ENCODE measurements at regions of chr3 and their contacts with region 1.

Region 1: DNA sequence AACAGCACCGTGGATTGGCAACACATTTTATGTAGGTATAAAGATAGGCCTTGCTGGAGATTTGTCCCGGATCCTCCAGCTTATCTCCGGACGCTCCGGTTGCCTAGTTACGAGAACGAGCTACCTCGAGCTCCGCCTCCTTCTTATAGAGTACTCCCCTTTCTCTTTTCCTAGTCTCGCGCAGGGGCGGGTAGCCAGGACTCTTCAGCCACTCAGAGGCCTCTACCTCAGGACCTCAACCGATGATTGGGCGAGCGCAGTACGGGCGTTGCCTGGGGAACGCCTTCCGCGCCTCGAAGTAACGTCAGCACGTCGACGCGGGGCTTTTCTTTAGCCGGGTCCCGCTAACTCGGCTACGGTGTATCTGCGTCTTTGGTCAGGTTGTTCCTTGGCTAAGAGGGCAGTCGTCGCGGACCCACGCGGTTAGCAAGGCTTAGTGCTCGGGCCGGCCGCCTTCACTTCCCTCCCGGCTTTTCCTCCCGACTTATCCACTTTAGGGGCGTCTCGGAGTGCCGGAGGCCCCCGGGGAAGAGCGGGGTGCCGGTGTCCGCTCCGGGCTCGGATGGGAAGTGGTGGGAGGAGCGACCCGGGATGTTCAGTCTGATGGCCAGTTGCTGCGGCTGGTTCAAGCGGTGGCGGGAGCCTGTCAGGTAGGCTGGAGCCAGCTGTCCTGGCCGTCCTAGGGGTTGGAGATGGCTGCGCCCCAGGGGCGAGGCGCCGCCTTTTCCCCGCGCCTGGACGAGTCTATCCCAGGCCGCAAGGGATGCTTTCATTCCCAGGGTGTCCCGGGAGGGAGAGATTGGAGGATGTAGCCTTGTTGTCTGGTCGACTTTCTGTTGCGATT is at the start of gene ARL13B:
- DNase-seq: peak; percentile 96
- H3K4me3 Mint-ChIP-seq: peak within 1 kb of the TSS; percentile 82
- H3K27ac Mint-ChIP-seq: peak within 1 kb of the TSS; percentile 56
- H3K4me1 Mint-ChIP-seq: peaks cover 19% of the 10 kb centered on the region
- H3K27me3 Mint-ChIP-seq: no peaks in the 10 kb centered on the region
- total RNA-seq, gene ARL13B: 12.0 to 12.9 TPM

Region 2: DNA sequence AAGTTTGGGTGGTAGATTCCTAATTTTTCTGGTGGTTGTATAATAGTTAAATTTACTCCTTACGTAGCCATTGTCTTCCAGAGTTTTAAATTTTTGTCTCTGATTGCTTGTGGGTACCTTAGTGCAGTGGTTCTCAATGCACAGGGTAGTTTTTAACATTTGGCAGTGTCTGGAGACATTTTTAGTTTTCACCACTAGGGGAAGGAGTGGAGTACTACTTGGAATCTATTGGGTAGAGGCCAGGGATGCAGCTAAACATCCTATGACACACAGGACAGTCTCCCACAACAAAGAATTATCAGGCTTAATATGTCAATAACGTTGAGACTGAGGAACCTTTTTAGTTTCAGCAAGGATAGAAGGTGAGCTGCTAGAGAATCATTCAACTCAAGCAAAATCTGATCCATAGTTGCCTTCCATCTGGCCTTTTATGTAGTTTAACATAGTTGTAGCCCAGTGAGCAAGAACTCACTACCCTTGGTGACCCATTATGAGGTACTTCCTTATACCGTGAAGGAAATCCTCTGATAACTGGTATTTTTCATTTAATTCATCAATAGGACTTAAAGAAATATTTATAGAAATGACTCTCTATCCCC is 57.0 kb after region 1 on chr3:
- CTCF ChIA-PET with region 1: no interaction called
- POLR2A ChIA-PET with region 1: no interaction called
- intact Hi-C with region 1: no loop called
- DNase-seq: no peak
- H3K4me3 Mint-ChIP-seq: no peak overlapping the region
- H3K27ac Mint-ChIP-seq: no peak overlapping the region
- H3K4me1 Mint-ChIP-seq: no peaks in the 10 kb centered on the region
- H3K27me3 Mint-ChIP-seq: no peaks in the 10 kb centered on the region

Region 3: DNA sequence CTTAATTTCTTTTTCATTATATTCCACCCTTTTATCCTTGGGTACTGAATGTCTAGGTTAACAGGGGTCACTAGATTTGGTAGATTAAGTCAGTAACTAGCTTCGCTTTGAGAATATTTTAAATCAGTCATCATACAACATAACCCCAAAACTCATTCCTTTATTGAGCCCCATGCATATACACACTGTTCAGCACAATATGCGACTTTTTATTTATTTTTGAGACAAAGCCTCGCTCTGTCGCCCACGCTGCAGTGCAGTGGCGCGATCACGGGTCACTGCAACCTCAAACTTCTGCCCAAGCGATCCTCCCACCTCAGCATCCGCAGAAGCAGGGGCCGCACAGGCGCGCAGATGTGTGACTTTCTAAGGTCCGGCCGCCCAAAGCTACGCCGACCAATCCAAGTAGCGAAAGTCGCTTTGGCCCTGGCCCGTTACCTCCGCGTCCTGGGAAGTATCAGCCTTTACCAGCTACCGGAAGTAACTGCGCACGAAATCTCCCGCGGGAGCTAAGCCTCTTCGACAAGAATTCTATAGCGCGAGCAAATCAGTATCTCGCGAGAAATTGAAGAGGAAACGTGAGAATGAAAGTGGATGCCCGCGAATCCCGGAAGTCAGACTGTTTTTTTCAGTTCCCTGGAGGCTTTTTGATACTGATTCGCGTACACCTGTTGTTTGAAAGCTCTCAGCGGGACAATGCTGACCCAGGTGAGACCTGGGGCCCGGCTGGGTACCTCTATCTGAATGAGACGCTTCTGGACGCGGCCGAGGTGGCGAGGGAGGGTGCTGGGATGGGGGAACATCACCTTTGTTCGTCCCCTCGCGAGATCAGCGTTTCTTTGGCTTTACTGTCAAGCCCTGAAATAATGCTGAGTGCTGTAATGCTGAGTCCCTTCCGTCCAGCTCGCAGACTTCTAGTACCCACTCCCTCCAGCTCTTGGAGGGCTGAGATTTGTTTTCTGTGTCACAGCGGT is 82.7 kb after region 1 on chr3 and contains the starts of genes DHFR2 and NSUN3:
- CTCF ChIA-PET with region 1: interaction called, 3 read pairs
- POLR2A ChIA-PET with region 1: interaction called, 4 read pairs
- intact Hi-C with region 1: loop called (anchors 1 kb)
- DNase-seq: peak; percentile 89
- H3K4me3 Mint-ChIP-seq: peak within 1 kb of the TSS; percentile 96
- H3K27ac Mint-ChIP-seq: peak within 1 kb of the TSS; percentile 99
- H3K4me1 Mint-ChIP-seq: peaks cover 52% of the 10 kb centered on the region
- H3K27me3 Mint-ChIP-seq: no peaks in the 10 kb centered on the region
- total RNA-seq, gene DHFR2: 6.8 to 9.7 TPM
- total RNA-seq, gene NSUN3: 15.3 to 16.2 TPM

Region 4: GRCh38 chr3:94083261-94083660 is 103.2 kb after region 1 on chr3:
- CTCF ChIA-PET with region 1: no interaction called
- POLR2A ChIA-PET with region 1: no interaction called
- intact Hi-C with region 1: no loop called
- DNase-seq: no peak
- H3K4me3 Mint-ChIP-seq: no peak overlapping the region
- H3K27ac Mint-ChIP-seq: no peak overlapping the region
- H3K4me1 Mint-ChIP-seq: peaks cover 35% of the 10 kb centered on the region
- H3K27me3 Mint-ChIP-seq: no peaks in the 10 kb centered on the region

Measured in activated CD4-positive, alpha-beta memory T cell treated with anti-CD3 and anti-CD28 coated beads for 36 hours (primary cell).